HCT116 (cell line): ENCODE measurements at regions of chr4 and their contacts with region 1.

Region 1: DNA sequence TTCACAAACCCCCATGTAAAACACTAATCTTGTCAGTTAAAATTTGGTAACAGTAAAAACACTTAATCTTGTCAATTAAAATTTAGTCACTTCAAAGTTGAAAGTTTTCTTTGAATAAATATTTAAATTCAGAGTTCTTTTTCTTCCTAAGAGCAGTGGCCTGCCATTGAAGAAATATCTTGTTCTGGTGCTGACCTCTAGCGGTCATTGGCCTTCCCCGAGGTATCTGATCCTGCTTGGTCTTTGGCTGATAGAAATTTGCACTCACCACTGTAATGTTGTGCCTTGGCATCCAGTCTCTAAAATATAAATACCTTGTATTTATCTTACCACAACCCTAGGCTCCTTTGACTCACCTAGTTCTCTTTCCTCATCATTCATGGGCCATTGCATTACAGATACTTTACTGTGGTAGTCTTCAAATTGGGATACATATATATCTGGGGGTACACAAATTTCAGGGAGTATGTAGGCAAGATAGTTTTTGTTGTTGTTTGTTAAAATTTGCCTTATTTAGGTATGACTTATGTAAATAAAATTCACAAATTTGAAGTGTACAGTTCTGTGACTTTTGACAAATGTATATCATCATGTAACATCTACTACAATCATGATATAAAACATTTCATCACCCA is 6.7 kb upstream of the ART3 start:
- DNase-seq: peak; percentile 59
- ATAC-seq: peak; percentile 99
- H3K4me3 ChIP-seq: no peak overlapping the region
- H3K27ac ChIP-seq: no peak overlapping the region
- H3K4me1 ChIP-seq: no peaks in the 10 kb centered on the region
- H3K27me3 ChIP-seq: no peaks in the 10 kb centered on the region
- CTCF ChIP-seq: peak; percentile 78 to 85 (median 85)
- POLR2A ChIP-seq: no peak
- RAD21 ChIP-seq: peak; percentile 87

Region 2: DNA sequence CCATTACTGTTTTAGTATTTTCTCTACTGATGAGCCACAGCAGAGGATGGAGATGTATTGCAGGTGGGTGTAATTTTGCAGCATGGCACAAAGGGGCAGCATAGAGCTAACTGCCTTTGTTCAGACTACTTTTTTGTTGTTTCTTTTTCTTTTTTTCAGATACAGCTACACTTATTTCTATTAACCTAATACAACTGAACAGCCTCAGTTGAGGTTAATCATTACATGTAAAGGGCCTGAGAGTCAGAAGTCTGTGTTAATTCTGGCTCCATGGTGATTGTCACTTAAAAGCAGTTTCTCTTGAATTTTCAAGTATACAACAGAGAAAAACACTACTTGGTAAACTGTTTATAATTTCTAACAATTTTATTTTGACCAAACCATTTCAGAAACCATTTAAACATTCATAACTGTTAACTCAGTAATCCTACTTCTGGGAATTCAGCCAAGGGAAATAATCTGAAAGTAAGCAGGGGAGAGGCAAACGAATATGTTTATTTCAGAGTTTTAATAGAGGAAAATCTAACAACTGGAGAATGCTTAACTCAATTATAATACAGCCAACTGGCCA is 151.6 kb before region 1 on chr4:
- CTCF ChIA-PET with region 1: interaction called, 4 read pairs
- POLR2A ChIA-PET with region 1: no interaction called
- RAD21 ChIA-PET with region 1: no interaction called
- intact Hi-C with region 1: loop called (anchors 5 kb)
- DNase-seq: peak; percentile 13
- ATAC-seq: peak; percentile 88
- H3K4me3 ChIP-seq: no peak overlapping the region
- H3K27ac ChIP-seq: no peak overlapping the region
- H3K4me1 ChIP-seq: no peaks in the 10 kb centered on the region; a peak in 1 of 4 replicates
- H3K27me3 ChIP-seq: no peaks in the 10 kb centered on the region
- CTCF ChIP-seq: peak; percentile 62 to 88 (median 76)
- POLR2A ChIP-seq: no peak
- RAD21 ChIP-seq: peak; percentile 72